SK-N-SH (cell line): ENCODE measurements at regions of chr7 and their contacts with region 1.

Region 1: DNA sequence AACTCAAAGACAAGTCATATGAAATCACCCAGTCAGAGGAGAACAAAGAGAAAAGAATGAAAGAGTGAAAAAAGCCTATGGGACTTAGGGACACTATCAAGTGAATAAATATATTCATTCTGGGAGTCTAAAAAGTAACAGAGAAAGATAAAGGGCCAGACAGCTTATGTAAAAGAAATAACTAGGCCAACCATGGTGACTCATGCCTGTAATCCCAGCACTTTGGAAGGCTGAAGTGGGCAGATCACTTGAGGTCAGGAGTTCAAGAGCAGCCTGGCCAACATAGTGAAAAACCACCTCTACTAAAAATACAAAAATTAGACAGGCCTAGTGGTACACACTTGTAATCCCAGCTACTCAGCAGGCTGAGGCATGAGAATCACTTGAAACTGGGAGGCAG is 154.7 kb upstream of the TMEM106B start:
- DNase-seq: no peak
- H3K4me3 ChIP-seq: no peak overlapping the region
- H3K27ac ChIP-seq: no peak overlapping the region
- H3K4me1 ChIP-seq: no peaks in the 10 kb centered on the region
- H3K27me3 ChIP-seq: no peaks in the 10 kb centered on the region
- CTCF ChIP-seq: no peak
- EP300 ChIP-seq: no peak
- RAD21 ChIP-seq: no peak

Region 2: GRCh38 chr7:11613292-11613930 is 443.0 kb before region 1 on chr7:
- CTCF ChIA-PET with region 1: no interaction called
- POLR2A ChIA-PET with region 1: no interaction called
- DNase-seq: no peak
- H3K4me3 ChIP-seq: no peak overlapping the region
- H3K27ac ChIP-seq: no peak overlapping the region
- H3K4me1 ChIP-seq: peaks cover 0 to 3% of the 10 kb centered on the region in 2 experiments; a peak in 2 of 4 replicates
- H3K27me3 ChIP-seq: no peaks in the 10 kb centered on the region
- CTCF ChIP-seq: no peak
- EP300 ChIP-seq: no peak
- RAD21 ChIP-seq: no peak

Region 3: DNA sequence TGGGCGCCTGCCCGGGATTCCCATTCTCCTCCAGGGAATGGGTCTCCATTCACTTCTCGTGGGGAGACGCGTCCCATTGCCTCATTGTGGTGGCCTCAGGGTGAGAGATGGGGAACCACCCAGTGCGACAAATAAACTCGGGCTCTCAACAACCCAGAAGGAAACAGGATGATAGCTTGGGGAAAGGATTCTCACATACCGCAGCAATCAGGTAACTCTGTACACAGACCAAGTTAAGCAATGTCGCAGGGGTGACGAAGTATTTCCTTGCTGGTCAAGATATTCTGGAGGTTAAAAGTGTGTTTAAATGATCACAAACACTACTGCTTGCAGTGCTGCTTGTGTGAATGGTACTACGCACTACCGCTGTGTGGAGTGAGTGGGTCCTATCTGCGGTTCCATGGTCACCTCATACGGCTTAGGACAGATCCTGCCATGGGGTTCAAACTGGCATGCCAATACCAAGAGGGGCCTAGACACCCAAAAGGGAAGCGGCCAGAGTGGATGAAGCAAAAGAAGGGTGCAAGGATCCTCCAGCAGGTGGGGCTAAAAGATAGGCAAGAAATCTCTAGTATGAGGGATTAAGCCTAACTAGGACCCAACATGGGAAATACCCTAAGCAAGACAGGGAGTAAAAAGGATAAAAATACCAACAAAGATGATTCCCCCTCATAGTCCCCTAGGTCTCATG is 10.9 kb after region 1 on chr7:
- CTCF ChIA-PET with region 1: interaction called, 13 read pairs
- POLR2A ChIA-PET with region 1: no interaction called
- DNase-seq: peak; percentile 60
- H3K4me3 ChIP-seq: no peak overlapping the region; a peak in 1 of 4 replicates
- H3K27ac ChIP-seq: no peak overlapping the region
- H3K4me1 ChIP-seq: peaks cover 0 to 4% of the 10 kb centered on the region in 2 experiments; a peak in 2 of 4 replicates
- H3K27me3 ChIP-seq: no peaks in the 10 kb centered on the region
- CTCF ChIP-seq: peak; percentile 78
- EP300 ChIP-seq: no peak
- RAD21 ChIP-seq: peak; percentile 98